Adrenal gland (tissue), 19 donors: ENCODE measurements at regions of chr12 and their contacts with region 1.

Region 1: DNA sequence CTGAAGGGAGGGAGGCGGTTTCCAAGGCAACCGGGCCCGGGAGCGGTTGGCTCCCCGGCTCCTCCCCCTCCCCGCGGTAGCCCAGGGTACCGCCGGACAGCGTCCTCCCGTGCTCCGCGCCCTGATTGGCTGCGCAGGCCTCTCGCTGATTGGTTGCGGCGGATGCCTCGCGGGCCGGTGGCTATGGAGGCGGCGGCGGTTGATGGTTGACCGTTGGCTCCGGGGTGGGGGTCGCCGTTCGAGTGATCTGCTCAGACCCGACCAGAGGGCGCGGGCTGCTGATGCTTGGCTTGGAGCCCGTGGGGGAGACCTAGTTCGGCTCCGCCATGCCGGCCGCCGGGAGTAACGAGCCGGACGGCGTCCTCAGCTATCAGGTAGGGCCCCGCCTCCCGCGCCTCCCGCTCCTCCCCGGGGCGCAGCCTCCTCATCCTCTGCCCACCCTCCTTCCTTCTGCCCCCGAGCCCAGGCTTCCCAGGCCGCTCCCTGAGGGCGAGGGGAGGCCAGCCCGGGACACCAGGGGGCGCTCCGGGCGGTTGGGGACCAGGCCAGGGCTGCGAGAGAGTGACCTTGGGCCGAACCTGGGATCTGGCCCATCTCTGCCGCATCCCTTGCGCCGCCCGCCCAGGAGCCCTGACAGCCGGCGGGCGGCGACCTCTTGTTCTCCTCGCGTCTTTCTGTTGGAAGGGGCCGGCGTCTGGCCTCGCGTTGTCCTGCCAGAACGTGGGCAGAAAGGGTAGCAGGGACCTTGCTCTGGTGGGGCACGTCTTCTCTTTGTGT is at the start of gene SLC4A8:
- DNase-seq: peak; percentile 86 to 97 (median 95)
- H3K4me3 ChIP-seq: peak within 1 kb of the TSS in 3 of 4 donors; percentile 1 to 54 (median 25)
- H3K27ac ChIP-seq: peak within 1 kb of the TSS in 2 of 5 donors; percentile 18 to 71
- H3K4me1 ChIP-seq: peaks cover 4 to 17% of the 10 kb centered on the region in 2 donors
- H3K27me3 ChIP-seq: no peaks in the 10 kb centered on the region
- CTCF ChIP-seq: peak; percentile 54 to 78 (median 64)
- POLR2A ChIP-seq: no peak
- total RNA-seq, gene SLC4A8: 3.0 to 27.0 (median 13.8) TPM

Region 2: GRCh38 chr12:51531978-51532497 is 107.2 kb after region 1 on chr12:
- intact Hi-C with region 1: loop called (anchors 2 to 5 kb)
- DNase-seq: peak; percentile 68 to 89 (median 78)
- H3K4me3 ChIP-seq: no peak overlapping the region
- H3K27ac ChIP-seq: no peak overlapping the region
- H3K4me1 ChIP-seq: no peaks in the 10 kb centered on the region
- H3K27me3 ChIP-seq: no peaks in the 10 kb centered on the region
- CTCF ChIP-seq: peak; percentile 81 to 90 (median 88)
- POLR2A ChIP-seq: no peak

Region 3: DNA sequence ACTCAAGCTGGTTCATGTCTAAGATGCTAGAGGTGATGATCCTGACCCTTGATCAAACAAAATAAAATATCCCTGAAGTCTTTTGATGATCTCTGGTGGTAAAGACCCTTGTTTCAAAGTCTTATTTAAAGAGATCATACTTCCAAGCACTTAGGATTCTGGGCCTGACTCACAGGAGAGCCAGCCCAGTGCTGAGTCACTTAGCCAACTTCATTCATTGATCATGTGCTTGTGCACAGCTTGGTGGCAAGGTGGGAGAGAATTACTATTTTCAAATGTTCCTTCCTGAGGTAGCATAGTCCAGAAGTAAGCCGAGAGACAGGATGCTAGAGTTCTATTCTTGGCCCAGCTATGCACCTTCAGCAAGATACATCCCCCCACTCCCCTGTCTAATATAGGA is 206.7 kb after region 1 on chr12:
- intact Hi-C with region 1: no loop called
- DNase-seq: peak; percentile 26 to 54 (median 33)
- H3K4me3 ChIP-seq: no peak overlapping the region
- H3K27ac ChIP-seq: no peak overlapping the region
- H3K4me1 ChIP-seq: peaks cover 0 to 14% of the 10 kb centered on the region in 2 donors
- H3K27me3 ChIP-seq: no peaks in the 10 kb centered on the region
- CTCF ChIP-seq: no peak
- POLR2A ChIP-seq: no peak

Region 4: GRCh38 chr12:51823875-51824565 is 399.2 kb after region 1 on chr12:
- intact Hi-C with region 1: loop called in 1 of 2 experiments (anchors 10 kb)
- DNase-seq: peak in 6 of 7 donors; percentile 28 to 63 (median 36)
- H3K4me3 ChIP-seq: no peak overlapping the region
- H3K27ac ChIP-seq: no peak overlapping the region
- H3K4me1 ChIP-seq: no peaks in the 10 kb centered on the region
- H3K27me3 ChIP-seq: peaks cover 12% of the 10 kb centered on the region
- CTCF ChIP-seq: peak; percentile 23 to 53 (median 46)
- POLR2A ChIP-seq: no peak

Region 5: GRCh38 chr12:51871126-51871525 is 446.3 kb after region 1 on chr12:
- intact Hi-C with region 1: loop called in 1 of 2 experiments (anchors 5 kb)
- DNase-seq: peak in 1 of 7 donors; percentile 41
- H3K4me3 ChIP-seq: no peak overlapping the region
- H3K27ac ChIP-seq: no peak overlapping the region
- H3K4me1 ChIP-seq: peaks cover 6% of the 10 kb centered on the region in 2 donors
- H3K27me3 ChIP-seq: no peaks in the 10 kb centered on the region
- CTCF ChIP-seq: no peak
- POLR2A ChIP-seq: no peak